Sciatic nerve (tissue), 2 donors: ENCODE measurements at regions of chr11 and their contacts with region 1.

Region 1: DNA sequence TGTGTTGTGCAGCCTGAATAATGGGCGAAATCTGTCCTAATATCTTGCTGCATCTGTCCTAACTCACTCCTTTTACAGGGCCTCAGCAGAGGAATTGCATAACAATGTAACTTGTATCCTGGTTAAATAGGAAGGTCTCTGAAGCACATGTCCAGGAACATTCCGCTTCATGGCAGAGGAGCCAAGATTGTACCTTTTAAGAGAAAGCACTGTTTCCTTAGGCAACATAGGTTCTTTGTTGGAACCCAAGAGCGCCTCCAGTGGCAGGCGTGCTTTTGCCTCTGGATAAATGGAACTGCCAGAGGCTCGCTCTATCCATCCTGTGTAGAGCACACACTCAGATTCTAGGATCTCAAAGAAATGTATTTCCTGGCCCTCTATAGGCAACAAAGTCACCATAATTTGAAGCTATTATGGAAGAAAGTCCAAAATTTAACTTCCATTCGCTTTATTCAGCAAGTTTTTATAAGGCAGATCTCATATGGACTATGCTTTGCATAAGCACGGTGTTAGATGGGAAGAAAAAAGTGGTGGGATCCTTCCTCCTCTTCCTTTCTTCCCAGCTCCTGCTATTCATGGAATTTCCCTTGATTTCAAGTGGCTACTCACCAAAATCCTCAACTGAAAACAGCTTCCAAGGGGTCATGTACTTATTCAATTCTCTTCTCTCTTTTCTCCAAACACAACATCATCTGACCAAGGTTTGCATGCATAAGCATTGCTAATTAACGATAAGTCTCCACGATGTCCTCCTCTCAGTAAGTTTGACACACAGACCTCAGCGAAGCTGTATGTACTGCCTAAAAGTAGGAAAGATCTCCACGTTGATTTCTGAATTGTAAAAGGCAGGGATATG is at the start of gene BLID:
- DNase-seq: peak; percentile 70
- ATAC-seq: peak; percentile 85
- total RNA-seq, gene BLID: 9.3 TPM

Region 2: GRCh38 chr11:121767433-121767832 is 348.3 kb before region 1 on chr11:
- intact Hi-C with region 1: no loop called
- DNase-seq: no peak
- ATAC-seq: peak; percentile 23

Region 3: GRCh38 chr11:121965330-121965729 is 150.4 kb before region 1 on chr11:
- intact Hi-C with region 1: no loop called
- DNase-seq: no peak
- ATAC-seq: no peak

Region 4: DNA sequence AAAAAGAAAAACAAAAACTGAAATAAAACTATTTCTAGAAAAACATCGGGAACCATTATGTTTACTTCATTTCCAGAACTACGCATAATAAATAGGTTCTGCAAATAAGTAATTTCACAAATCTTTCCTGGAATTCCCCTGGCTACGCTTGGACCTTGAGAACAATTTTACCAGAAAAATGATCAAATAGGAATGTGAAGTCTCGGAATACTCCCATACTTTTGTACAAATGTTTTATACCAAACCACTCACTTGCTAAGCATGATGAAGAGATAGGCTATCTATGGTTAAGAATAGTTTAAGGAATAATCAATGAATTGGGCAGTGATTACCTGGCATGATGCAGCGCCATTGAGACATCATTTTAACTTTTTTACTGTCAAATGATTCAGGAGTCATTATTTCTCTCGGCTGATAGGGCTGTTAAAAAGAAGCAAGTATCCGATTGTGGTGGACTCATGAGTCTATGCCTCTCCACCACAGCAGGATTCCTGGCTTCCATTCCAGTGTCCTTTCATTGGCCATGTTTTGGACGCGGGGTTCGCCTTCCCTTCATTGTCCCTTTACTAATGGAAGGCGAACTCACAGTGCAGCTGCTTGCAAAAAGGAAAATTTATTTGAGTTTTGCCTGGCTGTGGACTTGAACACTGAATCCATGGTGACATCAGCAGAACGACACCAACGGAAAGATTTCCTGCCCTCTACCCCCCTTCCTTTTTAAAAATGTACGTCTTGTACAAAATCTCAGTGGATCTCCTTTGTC is 40.2 kb after region 1 on chr11:
- intact Hi-C with region 1: no loop called
- DNase-seq: no peak
- ATAC-seq: no peak

Region 5: DNA sequence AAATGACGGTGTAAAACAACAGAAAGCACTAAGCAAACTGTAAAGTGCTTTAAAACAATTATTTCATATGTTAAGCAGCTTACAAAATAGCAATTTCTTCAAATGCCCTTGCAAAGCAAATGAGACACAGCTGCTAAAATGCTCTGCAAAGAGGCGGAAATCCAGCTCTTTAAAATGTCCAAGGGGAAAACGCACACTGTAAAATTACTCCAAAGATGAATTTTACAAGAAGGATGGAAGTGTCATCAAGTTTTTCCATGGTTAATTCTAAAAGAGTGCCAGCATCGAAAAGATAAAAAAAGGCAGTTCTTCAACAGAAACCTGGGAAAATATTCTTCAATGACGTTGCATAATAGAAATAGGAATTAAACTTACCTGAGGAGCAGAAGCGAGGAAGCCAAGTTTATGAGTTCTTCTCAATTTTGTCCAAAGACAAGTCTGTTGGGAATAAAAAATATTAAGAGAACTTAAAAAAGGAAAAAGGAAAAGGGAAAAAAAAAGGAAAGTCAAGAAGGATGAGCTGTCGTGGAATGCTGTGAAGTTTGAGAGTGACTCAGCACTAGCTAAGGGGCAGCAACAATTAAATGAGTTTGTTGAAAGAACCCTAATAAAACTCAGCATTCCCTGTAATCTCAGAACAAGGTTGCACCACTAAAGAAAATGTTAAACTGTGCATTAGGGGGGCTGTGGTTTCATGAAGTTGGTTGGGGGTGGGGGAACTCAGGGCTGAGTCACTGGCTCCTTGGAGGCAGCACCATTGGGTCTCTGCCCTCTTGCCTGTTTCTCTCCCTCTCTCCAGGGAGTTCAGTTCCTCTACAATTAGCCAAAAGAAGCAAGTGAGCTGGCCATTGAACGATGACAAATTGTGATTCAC is 64.4 kb after region 1 on chr11:
- intact Hi-C with region 1: loop called (anchors 10 kb)
- DNase-seq: no peak
- ATAC-seq: peak; percentile 77